ENCODE measurements at regions of chrX and their contacts with region 1.

Region 1: DNA sequence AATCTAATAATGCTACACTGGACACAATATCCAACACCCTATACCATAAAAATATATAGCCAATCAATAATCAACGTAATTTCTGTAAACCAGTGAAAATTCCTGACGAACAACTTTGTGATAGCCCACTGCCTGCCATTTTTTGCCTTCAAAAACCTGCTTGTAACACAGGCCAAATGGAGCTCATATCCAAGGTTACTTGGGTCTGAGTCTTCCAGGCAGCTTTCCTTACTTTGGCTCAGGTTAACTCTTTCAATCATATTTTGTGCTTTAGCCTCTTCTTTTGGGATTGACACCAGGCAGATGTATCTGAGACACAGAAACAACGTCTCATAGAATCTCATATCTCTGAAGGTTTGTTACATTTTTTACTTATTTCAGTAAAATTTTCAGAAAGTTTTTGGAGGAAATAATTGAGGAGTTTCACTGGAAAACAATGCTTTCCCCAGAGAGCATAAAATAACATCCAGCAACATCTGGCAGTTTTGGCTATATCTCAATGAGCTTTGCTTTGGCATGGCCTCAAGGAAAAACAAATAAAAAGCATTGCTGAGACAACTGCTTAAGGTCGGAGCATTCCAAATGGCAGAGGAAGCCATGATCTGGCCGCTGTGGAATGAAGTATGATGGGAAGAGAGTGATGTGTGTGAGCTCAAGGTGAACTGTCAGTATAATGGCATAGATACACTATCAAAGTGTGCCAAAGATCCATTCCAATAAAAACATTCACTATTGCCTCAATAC is 162.9 kb upstream of the SPIN4 start:
- DNase-seq: no peak
- ATAC-seq: peak; percentile 29
- H3K4me3 ChIP-seq: no peak overlapping the region
- H3K27ac ChIP-seq: no peak overlapping the region
- H3K4me1 ChIP-seq: no peaks in the 10 kb centered on the region
- H3K27me3 ChIP-seq: no peaks in the 10 kb centered on the region

Region 2: DNA sequence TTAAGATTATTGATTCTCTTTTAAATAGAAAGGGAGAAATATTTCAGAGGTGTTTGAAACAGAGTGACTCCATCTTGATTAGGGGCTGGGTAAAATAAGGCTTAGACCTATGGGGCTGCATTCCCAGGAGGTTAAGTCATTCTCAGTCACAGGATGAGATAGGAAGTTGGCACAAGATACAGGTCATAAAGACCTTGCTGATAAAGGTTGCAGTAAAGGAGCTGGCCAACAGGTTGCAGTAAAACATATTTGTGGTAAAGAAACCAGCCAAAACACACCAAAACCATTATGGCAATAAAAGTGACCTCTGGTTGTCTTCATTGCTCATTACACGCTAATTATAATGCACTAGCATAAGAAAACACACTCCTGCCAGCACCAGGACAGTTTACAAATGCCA is 327.9 kb before region 1 on chrX:
- intact Hi-C with region 1: no loop called
- DNase-seq: peak in 1 of 2 donors; percentile 0
- ATAC-seq: no peak
- H3K4me3 ChIP-seq: no peak overlapping the region
- H3K27ac ChIP-seq: no peak overlapping the region
- H3K4me1 ChIP-seq: no peaks in the 10 kb centered on the region
- H3K27me3 ChIP-seq: no peaks in the 10 kb centered on the region

Region 3: DNA sequence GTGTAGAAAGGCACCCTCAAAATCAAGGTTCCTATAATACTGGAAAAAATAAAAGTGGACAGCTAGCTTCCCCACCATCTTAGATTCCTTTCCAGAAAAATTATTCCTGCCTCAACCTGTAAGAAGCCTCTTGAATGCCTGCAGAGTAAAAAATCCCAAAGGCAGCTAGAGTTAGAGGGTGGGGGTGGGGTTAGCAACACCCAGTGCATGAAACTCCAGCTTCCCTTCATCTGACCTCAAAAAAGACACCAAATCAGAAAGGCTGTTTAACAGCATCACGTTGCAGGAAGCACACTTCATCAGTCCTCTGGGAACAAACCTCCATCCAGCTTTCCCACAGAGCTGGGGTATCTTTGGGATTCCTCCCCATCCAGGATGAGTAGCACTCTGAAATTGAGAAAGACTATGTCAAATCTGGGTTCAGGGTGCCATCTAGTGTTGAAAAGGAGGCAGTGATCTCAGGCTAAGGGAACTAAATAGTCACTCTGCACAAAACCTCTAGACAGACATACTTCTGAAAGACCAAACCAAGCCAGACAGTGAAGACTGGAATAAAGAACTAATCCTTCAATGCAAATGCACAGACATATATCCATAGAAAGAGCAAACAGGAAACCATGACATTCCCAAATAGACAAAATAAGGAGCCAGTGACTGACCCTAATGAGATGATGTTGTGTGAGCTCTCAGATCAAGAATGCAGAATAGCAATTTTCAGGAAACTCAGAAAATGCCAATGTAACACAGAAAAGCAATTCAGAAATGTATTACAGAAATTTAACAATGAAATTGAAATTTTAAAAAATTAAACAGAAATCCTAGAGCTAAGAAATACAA is 173.1 kb after region 1 on chrX:
- intact Hi-C with region 1: loop called in 1 of 2 experiments (anchors 10 kb)
- DNase-seq: no peak
- ATAC-seq: no peak
- H3K4me3 ChIP-seq: no peak overlapping the region
- H3K27ac ChIP-seq: no peak overlapping the region
- H3K4me1 ChIP-seq: no peaks in the 10 kb centered on the region
- H3K27me3 ChIP-seq: no peaks in the 10 kb centered on the region

Measured in aorta (tissue), 5 donors.